Dendritic cell treated with granulocyte-macrophage colony-stimulating factor and Interleukin-4, amounts not matched to agents 40 ng/mL and 50 ng/mL, for 4 days (primary cell): ENCODE measurements at regions of chr3 and their contacts with region 1.

Region 1: GRCh38 chr3:31567036-31567435 is 34.3 kb downstream of the STT3B start:
- H3K4me3 Mint-ChIP-seq: no peak overlapping the region
- H3K27ac Mint-ChIP-seq: no peak overlapping the region
- H3K4me1 Mint-ChIP-seq: peaks cover 80% of the 10 kb centered on the region
- H3K27me3 Mint-ChIP-seq: no peaks in the 10 kb centered on the region

Region 2: GRCh38 chr3:31600435-31600834 is 33.4 kb after region 1 on chr3:
- intact Hi-C with region 1: loop called (anchors 5 kb)
- H3K4me3 Mint-ChIP-seq: no peak overlapping the region
- H3K27ac Mint-ChIP-seq: no peak overlapping the region
- H3K4me1 Mint-ChIP-seq: peaks cover 15% of the 10 kb centered on the region
- H3K27me3 Mint-ChIP-seq: no peaks in the 10 kb centered on the region

Region 3: DNA sequence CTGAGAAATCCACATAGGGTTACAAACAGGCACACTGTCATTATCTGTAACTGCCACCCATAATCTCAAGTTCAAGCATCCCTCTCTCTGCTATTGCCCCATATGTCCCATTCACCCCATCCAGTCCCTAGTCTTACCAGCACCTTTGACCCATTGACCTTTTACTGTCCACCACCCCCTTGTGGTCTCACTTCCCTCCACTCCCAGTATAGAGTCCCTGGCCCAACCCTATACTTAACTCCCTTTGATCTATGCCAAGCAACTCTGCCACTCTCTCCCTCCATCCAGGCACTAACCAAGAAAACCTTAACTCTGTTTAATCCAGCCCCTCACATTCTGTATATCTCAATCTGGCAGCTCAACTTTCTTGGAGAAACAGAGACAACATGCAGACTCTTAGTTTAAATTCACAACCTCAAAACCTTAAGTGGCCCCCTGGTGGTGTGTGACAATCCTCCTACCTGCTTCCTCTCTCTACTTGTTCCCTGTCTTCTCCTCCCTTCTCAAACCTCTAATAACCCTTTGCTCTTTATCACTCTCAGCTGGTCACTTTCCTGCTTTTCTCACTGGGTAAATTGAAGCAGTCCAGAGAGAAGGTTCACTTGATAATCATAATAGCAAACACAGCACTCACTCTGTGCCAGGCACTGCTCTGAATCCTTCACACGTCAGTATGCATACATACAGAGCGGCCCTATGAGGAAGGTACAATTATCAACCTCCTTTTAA is 128.4 kb after region 1 on chr3:
- intact Hi-C with region 1: no loop called
- H3K4me3 Mint-ChIP-seq: no peak overlapping the region
- H3K27ac Mint-ChIP-seq: no peak overlapping the region
- H3K4me1 Mint-ChIP-seq: peaks cover 5% of the 10 kb centered on the region
- H3K27me3 Mint-ChIP-seq: no peaks in the 10 kb centered on the region

Region 4: DNA sequence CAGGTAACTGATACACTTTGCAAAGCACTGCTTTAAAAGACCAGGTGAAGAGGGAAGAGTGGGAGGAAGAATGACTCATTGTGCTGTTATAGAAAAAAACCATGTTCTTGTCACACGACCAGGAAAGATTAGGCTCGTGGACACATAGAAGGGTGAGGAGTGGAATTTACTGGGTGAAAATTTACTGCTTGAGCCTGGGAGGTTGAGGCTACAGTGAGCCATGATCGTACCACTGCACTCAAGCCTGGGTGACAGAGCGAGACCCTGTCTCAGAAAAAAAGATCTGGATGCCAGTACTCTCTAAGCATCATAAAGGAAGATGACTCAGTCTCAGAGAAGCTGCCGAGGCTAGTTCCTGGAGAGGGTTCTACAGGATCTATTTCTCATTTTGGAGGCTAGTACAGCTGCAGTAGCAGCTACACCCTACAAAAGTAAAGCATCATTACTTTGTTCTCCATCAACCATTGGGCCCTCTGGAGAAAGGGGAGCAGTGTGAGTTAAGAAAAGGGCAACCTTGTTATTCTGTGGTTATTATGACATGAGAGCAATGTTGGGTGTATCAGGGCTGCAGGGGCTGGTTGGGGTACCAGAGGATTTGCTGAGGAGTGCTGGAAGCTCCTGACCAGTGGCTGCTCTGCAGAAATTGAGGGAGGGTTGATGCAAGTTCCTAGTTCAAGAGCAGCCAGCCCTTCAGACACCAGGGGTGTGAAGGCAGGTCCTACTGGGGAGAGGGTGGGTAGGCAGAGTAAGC is 746.9 kb after region 1 on chr3:
- intact Hi-C with region 1: no loop called
- H3K4me3 Mint-ChIP-seq: no peak overlapping the region
- H3K27ac Mint-ChIP-seq: no peak overlapping the region
- H3K4me1 Mint-ChIP-seq: peaks cover 14% of the 10 kb centered on the region
- H3K27me3 Mint-ChIP-seq: peaks cover 5% of the 10 kb centered on the region